Heart left ventricle (tissue), 16 donors: ENCODE measurements at regions of chr18 and their contacts with region 1.

Region 1: DNA sequence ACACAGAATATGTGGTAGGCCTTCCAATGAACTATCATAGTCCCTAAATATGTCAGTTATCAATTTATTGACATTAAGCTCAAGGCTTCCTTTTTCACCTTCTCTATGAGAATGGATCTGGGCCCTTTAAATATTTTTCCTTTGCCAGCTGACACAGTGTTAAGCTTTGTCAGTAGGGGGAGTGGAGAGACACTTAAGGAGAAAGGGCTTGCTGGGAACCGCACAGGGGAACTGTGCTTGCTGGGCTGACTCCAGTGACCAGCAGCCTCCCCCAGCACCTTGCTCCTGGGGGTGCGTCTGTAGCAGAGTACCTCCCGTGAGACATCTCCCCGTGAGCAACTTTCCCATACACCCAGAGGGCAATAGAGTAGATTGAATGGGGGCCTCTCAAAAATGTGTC is 6.5 kb upstream of the PTPN2 start:
- DNase-seq: no peak
- ATAC-seq: peak in 1 of 4 donors; percentile 56
- H3K4me3 ChIP-seq: no peak overlapping the region
- H3K27ac ChIP-seq: no peak overlapping the region
- H3K4me1 ChIP-seq: peaks cover 0 to 12% (median 0%) of the 10 kb centered on the region in 12 donors
- H3K27me3 ChIP-seq: peaks cover 0 to 7% (median 0%) of the 10 kb centered on the region in 9 donors
- CTCF ChIP-seq: no peak
- POLR2A ChIP-seq: no peak

Region 2: GRCh38 chr18:12744103-12744502 is 146.4 kb before region 1 on chr18:
- intact Hi-C with region 1: loop called in 3 of 10 experiments (anchors 5 to 10 kb)
- DNase-seq: no peak
- ATAC-seq: peak in 3 of 4 donors; percentile 48 to 61 (median 55)
- H3K4me3 ChIP-seq: no peak overlapping the region
- H3K27ac ChIP-seq: no peak overlapping the region
- H3K4me1 ChIP-seq: no peaks in the 10 kb centered on the region
- H3K27me3 ChIP-seq: no peaks in the 10 kb centered on the region
- CTCF ChIP-seq: peak; percentile 25 to 69 (median 52)
- POLR2A ChIP-seq: no peak

Region 3: GRCh38 chr18:12819322-12819721 is 71.2 kb before region 1 on chr18:
- intact Hi-C with region 1: loop called in 1 of 10 experiments (anchors 10 kb)
- DNase-seq: no peak
- ATAC-seq: no peak
- H3K4me3 ChIP-seq: no peak overlapping the region
- H3K27ac ChIP-seq: peak overlapping the region in 1 of 12 donors; percentile 34
- H3K4me1 ChIP-seq: peaks cover 0 to 5% (median 0%) of the 10 kb centered on the region in 12 donors
- H3K27me3 ChIP-seq: no peaks in the 10 kb centered on the region
- CTCF ChIP-seq: no peak
- POLR2A ChIP-seq: no peak

Region 4: GRCh38 chr18:12838178-12838634 is 52.3 kb before region 1 on chr18:
- intact Hi-C with region 1: loop called in 1 of 10 experiments (anchors 5 kb)
- DNase-seq: peak in 1 of 5 donors; percentile 33
- ATAC-seq: peak in 3 of 4 donors; percentile 42 to 80 (median 79)
- H3K4me3 ChIP-seq: peak overlapping the region in 2 of 12 donors; percentile 18 to 32
- H3K27ac ChIP-seq: peak overlapping the region in 5 of 12 donors; percentile 16 to 92 (median 30)
- H3K4me1 ChIP-seq: peaks cover 0 to 50% (median 5%) of the 10 kb centered on the region in 12 donors
- H3K27me3 ChIP-seq: no peaks in the 10 kb centered on the region
- CTCF ChIP-seq: no peak
- POLR2A ChIP-seq: no peak